Naive thymus-derived CD4-positive, alpha-beta T cell (primary cell): ENCODE measurements at regions of chr16 and their contacts with region 1.

Region 1: GRCh38 chr16:58733671-58734458 is at the start of gene GOT2:
- DNase-seq: peak; percentile 61 to 87 (median 77)
- ATAC-seq: peak; percentile 99
- H3K4me3 ChIP-seq: peak within 1 kb of the TSS; percentile 83
- H3K4me3 Mint-ChIP-seq: peak within 1 kb of the TSS; percentile 93 to 99 (median 98)
- H3K27ac ChIP-seq: peak within 1 kb of the TSS; percentile 79
- H3K27ac Mint-ChIP-seq: peak within 1 kb of the TSS; percentile 31 to 95 (median 91)
- H3K4me1 ChIP-seq: peaks cover 9 to 15% of the 10 kb centered on the region in 2 donors
- H3K4me1 Mint-ChIP-seq: peaks cover 16 to 50% (median 42%) of the 10 kb centered on the region in 7 donors
- H3K27me3 ChIP-seq: no peaks in the 10 kb centered on the region
- H3K27me3 Mint-ChIP-seq: peaks cover 0 to 3% (median 0%) of the 10 kb centered on the region in 5 donors
- total RNA-seq, gene GOT2: 24.3 to 76.6 (median 38.0) TPM

Region 2: GRCh38 chr16:58449768-58450167 is 284.1 kb before region 1 on chr16:
- CTCF ChIA-PET with region 1: no interaction called
- POLR2A ChIA-PET with region 1: no interaction called
- intact Hi-C with region 1: no loop called
- DNase-seq: no peak
- ATAC-seq: peak; percentile 38
- H3K4me3 ChIP-seq: no peak overlapping the region
- H3K4me3 Mint-ChIP-seq: no peak overlapping the region
- H3K27ac ChIP-seq: no peak overlapping the region
- H3K27ac Mint-ChIP-seq: no peak overlapping the region
- H3K4me1 ChIP-seq: no peaks in the 10 kb centered on the region
- H3K4me1 Mint-ChIP-seq: peaks cover 0 to 4% (median 0%) of the 10 kb centered on the region in 7 donors
- H3K27me3 ChIP-seq: no peaks in the 10 kb centered on the region
- H3K27me3 Mint-ChIP-seq: peaks cover 10 to 36% (median 15%) of the 10 kb centered on the region in 5 donors

Region 3: DNA sequence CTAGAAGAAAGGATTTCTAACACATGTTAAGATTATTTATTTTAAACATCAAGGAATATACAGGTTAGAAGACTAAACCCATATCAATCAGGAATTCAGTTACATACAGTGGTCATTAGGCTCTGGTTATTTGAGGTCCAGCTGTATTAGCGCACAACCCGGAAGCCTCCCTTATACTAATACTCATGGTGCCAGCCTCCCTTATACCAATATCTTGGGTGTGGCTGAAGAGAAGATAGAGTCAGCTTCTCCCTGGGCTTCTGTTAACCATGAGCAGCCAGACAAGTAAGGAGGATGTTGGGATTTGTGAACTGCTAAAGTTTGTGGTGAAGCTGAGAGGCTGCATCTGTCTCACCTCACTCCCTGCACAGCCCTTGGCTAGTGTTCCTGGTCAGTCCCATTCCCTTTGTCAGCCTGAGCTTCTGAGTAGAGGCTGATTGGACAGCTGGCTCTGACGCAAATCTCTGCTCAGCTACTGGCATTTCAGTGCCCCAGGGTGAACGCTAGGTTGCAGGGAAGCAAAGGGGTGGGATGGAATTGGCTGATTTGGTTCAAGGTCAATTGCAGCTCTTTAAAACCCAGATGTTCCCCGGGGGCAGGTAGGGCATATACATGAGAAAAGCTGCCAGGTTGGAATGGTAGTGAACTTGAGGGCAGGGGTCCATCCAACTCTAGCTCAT is 81.3 kb before region 1 on chr16:
- CTCF ChIA-PET with region 1: no interaction called
- POLR2A ChIA-PET with region 1: no interaction called
- intact Hi-C with region 1: no loop called
- DNase-seq: no peak
- ATAC-seq: no peak
- H3K4me3 ChIP-seq: no peak overlapping the region
- H3K4me3 Mint-ChIP-seq: no peak overlapping the region
- H3K27ac ChIP-seq: no peak overlapping the region
- H3K27ac Mint-ChIP-seq: no peak overlapping the region
- H3K4me1 ChIP-seq: no peaks in the 10 kb centered on the region
- H3K4me1 Mint-ChIP-seq: no peaks in the 10 kb centered on the region
- H3K27me3 ChIP-seq: no peaks in the 10 kb centered on the region
- H3K27me3 Mint-ChIP-seq: peaks cover 0 to 5% (median 0%) of the 10 kb centered on the region in 5 donors

Region 4: GRCh38 chr16:58665200-58665599 is 68.7 kb before region 1 on chr16:
- CTCF ChIA-PET with region 1: no interaction called
- POLR2A ChIA-PET with region 1: no interaction called
- intact Hi-C with region 1: no loop called
- DNase-seq: no peak
- ATAC-seq: no peak
- H3K4me3 ChIP-seq: no peak overlapping the region
- H3K4me3 Mint-ChIP-seq: no peak overlapping the region
- H3K27ac ChIP-seq: no peak overlapping the region
- H3K27ac Mint-ChIP-seq: no peak overlapping the region
- H3K4me1 ChIP-seq: no peaks in the 10 kb centered on the region
- H3K4me1 Mint-ChIP-seq: peaks cover 0 to 1% (median 0%) of the 10 kb centered on the region in 7 donors
- H3K27me3 ChIP-seq: no peaks in the 10 kb centered on the region
- H3K27me3 Mint-ChIP-seq: no peaks in the 10 kb centered on the region

Region 5: DNA sequence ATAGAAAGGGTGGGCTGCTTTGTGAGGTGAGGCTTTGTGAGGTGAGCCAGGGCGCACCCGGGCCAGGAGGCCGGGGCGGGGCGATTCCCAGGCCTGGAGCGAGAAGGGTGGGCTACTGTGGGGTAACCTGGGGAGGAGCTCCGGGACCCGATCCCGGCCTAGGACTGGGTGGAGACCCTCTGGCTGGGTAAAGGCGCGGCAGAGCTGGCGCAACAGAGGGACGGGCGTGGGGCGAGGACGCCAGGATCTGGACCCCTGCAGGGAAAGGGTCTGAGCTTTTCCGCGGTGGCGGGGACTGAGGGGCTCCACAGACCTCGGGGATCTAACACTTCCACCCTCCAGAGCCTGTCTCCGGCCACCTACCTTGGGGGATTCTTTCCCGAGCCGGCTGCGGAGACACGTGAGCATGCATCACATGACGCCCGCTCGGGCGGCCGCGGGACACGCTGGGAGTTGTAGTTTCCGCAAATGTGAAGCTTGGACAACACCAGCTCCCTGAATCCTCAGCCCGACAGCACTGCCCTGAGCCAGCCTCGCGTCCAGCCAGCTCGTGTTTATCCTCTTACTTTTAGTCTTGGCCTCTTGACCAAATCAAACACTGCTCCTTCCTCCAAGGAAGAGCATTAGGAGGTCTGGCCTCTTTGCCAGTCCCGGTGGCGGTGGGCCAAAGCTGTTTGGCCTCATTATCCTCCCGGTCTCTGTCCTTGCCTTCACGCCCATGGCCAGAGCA is 49.3 kb before region 1 on chr16 and contains the start of gene SLC38A7:
- CTCF ChIA-PET with region 1: interaction called, 3 read pairs
- POLR2A ChIA-PET with region 1: no interaction called
- intact Hi-C with region 1: loop called (anchors 1 kb)
- DNase-seq: peak; percentile 49 to 73 (median 60)
- ATAC-seq: peak; percentile 88
- H3K4me3 ChIP-seq: peak within 1 kb of the TSS; percentile 78
- H3K4me3 Mint-ChIP-seq: peak within 1 kb of the TSS; percentile 86 to 95 (median 91)
- H3K27ac ChIP-seq: peak within 1 kb of the TSS; percentile 71
- H3K27ac Mint-ChIP-seq: peak within 1 kb of the TSS; percentile 52 to 91 (median 86)
- H3K4me1 ChIP-seq: peaks cover 12 to 20% of the 10 kb centered on the region in 2 donors
- H3K4me1 Mint-ChIP-seq: peaks cover 6 to 27% (median 22%) of the 10 kb centered on the region in 7 donors
- H3K27me3 ChIP-seq: no peaks in the 10 kb centered on the region
- H3K27me3 Mint-ChIP-seq: peaks cover 0 to 4% (median 0%) of the 10 kb centered on the region in 5 donors
- total RNA-seq, gene SLC38A7: 10.2 to 16.8 (median 16.7) TPM

Region 6: DNA sequence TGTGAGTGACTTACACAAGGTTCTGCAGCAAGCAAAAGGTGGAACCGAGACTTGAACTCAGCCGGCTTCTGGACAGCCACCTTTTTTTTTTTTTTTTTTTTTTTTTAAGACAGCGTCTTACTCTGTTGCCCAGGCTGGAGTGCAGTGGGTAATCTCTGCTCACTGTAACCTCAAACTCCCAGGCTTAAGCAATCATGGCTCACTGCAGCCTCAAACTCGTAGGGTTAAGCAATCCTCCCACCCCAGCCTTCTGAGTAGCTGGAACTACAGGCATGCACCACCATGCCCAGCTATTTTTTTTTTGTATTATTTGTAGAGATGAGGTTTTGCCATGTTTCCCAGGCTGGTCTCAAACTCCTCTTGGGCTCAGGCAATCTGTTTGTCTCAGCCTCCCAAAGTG is 55.5 kb after region 1 on chr16:
- CTCF ChIA-PET with region 1: no interaction called
- POLR2A ChIA-PET with region 1: no interaction called
- intact Hi-C with region 1: no loop called
- DNase-seq: no peak
- ATAC-seq: no peak
- H3K4me3 ChIP-seq: no peak overlapping the region
- H3K4me3 Mint-ChIP-seq: no peak overlapping the region
- H3K27ac ChIP-seq: no peak overlapping the region
- H3K27ac Mint-ChIP-seq: no peak overlapping the region
- H3K4me1 ChIP-seq: no peaks in the 10 kb centered on the region
- H3K4me1 Mint-ChIP-seq: no peaks in the 10 kb centered on the region
- H3K27me3 ChIP-seq: no peaks in the 10 kb centered on the region
- H3K27me3 Mint-ChIP-seq: peaks cover 8 to 48% (median 19%) of the 10 kb centered on the region in 5 donors